ENCODE measurements at regions of chrX and their contacts with region 1.

Region 1: GRCh38 chrX:21839334-21840192 is at the start of gene MBTPS2:
- DNase-seq: peak; percentile 69 to 90 (median 76)
- ATAC-seq: peak; percentile 93
- H3K4me3 ChIP-seq: peak within 1 kb of the TSS; percentile 86
- H3K4me3 Mint-ChIP-seq: peak within 1 kb of the TSS; percentile 96
- H3K27ac ChIP-seq: peak within 1 kb of the TSS in 1 of 2 donors; percentile 55
- H3K27ac Mint-ChIP-seq: peak within 1 kb of the TSS; percentile 93
- H3K4me1 ChIP-seq: peaks cover 12% of the 10 kb centered on the region
- H3K4me1 Mint-ChIP-seq: peaks cover 14% of the 10 kb centered on the region
- H3K27me3 ChIP-seq: no peaks in the 10 kb centered on the region
- H3K27me3 Mint-ChIP-seq: no peaks in the 10 kb centered on the region
- CTCF ChIP-seq: no peak
- total RNA-seq, gene MBTPS2: 3.1 to 3.4 TPM

Region 2: DNA sequence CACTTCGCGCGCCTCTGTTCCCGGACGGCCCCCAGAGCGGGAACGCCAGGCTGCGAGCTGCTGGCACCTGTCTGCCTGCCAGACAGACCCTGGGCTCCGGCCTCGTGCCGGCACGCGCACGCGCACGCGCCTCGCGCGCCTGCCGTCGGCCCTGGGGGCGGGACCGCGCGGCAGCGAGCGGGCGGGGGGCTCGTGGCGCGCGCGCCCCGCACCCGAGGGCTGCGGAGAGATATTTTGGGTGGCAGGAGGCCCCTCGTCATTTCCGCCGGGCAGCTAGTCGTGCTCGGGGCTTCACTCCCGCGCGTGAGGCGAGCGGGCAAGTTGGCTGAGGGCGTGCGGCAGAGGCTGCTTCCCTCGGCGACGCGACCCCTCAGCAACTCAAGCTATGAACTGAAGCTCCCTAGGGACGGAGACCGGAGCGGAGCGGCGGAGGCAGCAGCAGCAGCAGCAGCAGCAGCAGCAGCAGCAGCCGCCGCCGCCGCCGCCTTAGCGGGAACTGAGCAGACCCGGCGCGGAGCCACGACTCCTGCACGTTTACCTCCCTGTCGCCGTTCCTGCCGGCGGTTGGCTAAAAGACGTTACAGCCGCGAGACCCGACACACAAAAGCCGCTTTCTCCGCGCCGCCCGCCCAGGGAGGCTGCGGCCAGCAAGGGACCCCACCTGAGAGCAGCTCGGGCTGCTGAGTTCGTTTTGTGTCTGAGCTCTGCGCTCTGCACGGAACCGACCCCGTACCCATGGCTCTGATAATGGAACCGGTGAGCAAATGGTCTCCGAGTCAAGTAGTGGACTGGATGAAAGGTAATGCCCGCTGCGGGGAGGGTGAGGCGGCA is 465.2 kb before region 1 on chrX and contains the start of gene CNKSR2:
- CTCF ChIA-PET with region 1: no interaction called
- POLR2A ChIA-PET with region 1: no interaction called
- intact Hi-C with region 1: loop called in 1 of 2 experiments (anchors 5 kb)
- DNase-seq: peak; percentile 37 to 81 (median 64)
- ATAC-seq: peak; percentile 68
- H3K4me3 ChIP-seq: peak within 1 kb of the TSS; percentile 73
- H3K4me3 Mint-ChIP-seq: peak within 1 kb of the TSS; percentile 93
- H3K27ac ChIP-seq: peak within 1 kb of the TSS in 1 of 2 donors; percentile 35
- H3K27ac Mint-ChIP-seq: peak within 1 kb of the TSS; percentile 82
- H3K4me1 ChIP-seq: peaks cover 6% of the 10 kb centered on the region
- H3K4me1 Mint-ChIP-seq: peaks cover 41% of the 10 kb centered on the region
- H3K27me3 ChIP-seq: no peaks in the 10 kb centered on the region
- H3K27me3 Mint-ChIP-seq: no peaks in the 10 kb centered on the region
- CTCF ChIP-seq: no peak
- total RNA-seq, gene CNKSR2: 14.4 to 14.8 TPM

Region 3: GRCh38 chrX:21524008-21524407 is 315.6 kb before region 1 on chrX:
- CTCF ChIA-PET with region 1: no interaction called
- POLR2A ChIA-PET with region 1: no interaction called
- intact Hi-C with region 1: no loop called
- DNase-seq: no peak
- ATAC-seq: no peak
- H3K4me3 ChIP-seq: no peak overlapping the region
- H3K4me3 Mint-ChIP-seq: no peak overlapping the region
- H3K27ac ChIP-seq: no peak overlapping the region
- H3K27ac Mint-ChIP-seq: no peak overlapping the region
- H3K4me1 ChIP-seq: no peaks in the 10 kb centered on the region
- H3K4me1 Mint-ChIP-seq: peaks cover 5% of the 10 kb centered on the region
- H3K27me3 ChIP-seq: no peaks in the 10 kb centered on the region
- H3K27me3 Mint-ChIP-seq: no peaks in the 10 kb centered on the region
- CTCF ChIP-seq: no peak

Region 4: DNA sequence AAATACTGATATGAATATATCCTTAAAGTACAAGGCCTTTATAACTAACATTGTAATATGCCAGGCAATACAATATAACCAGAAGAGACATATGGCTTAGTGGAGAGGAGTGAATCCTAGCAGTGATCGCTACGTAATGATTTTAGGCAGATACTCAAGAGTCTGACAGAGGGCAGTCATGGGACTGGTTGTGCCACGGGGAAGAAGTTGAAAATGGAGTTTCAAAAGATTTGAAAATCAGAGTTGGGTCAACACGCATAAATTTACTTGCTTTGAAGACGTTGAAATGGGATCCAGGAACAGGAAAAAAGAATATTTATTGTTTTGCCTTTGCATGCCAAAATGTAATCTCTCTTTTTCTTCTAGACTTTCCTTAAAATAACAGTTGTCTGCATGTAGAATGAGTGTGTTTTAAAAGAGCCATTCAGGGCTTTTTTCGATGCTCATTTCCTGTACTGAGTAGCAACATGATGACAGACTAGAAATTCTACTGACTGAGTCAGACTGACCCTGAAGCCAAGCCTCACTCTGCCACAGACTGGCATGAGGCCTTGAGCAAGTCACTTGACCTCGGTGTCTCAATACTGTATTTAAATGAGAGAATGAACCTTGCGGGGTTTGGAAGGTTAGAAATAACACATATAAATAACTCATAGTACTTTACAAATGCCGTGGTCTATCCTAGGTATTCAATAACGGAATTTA is 92.9 kb after region 1 on chrX:
- CTCF ChIA-PET with region 1: no interaction called
- POLR2A ChIA-PET with region 1: no interaction called
- intact Hi-C with region 1: loop called in 1 of 2 experiments (anchors 10 kb)
- DNase-seq: peak in 2 of 14 experiments; percentile 31 to 52
- ATAC-seq: no peak
- H3K4me3 ChIP-seq: no peak overlapping the region
- H3K4me3 Mint-ChIP-seq: no peak overlapping the region
- H3K27ac ChIP-seq: no peak overlapping the region
- H3K27ac Mint-ChIP-seq: no peak overlapping the region
- H3K4me1 ChIP-seq: no peaks in the 10 kb centered on the region
- H3K4me1 Mint-ChIP-seq: peaks cover 14% of the 10 kb centered on the region
- H3K27me3 ChIP-seq: no peaks in the 10 kb centered on the region
- H3K27me3 Mint-ChIP-seq: no peaks in the 10 kb centered on the region
- CTCF ChIP-seq: no peak

Region 5: GRCh38 chrX:21972721-21973120 is 133.2 kb after region 1 on chrX:
- CTCF ChIA-PET with region 1: no interaction called
- POLR2A ChIA-PET with region 1: no interaction called
- intact Hi-C with region 1: loop called in 1 of 2 experiments (anchors 5 kb)
- DNase-seq: peak in 13 of 14 experiments; percentile 5 to 82 (median 39)
- ATAC-seq: peak; percentile 94
- H3K4me3 ChIP-seq: no peak overlapping the region
- H3K4me3 Mint-ChIP-seq: peak overlapping the region; percentile 83
- H3K27ac ChIP-seq: peak overlapping the region in 1 of 2 donors; percentile 83
- H3K27ac Mint-ChIP-seq: peak overlapping the region; percentile 94
- H3K4me1 ChIP-seq: peaks cover 17% of the 10 kb centered on the region
- H3K4me1 Mint-ChIP-seq: peaks cover 26% of the 10 kb centered on the region
- H3K27me3 ChIP-seq: no peaks in the 10 kb centered on the region
- H3K27me3 Mint-ChIP-seq: no peaks in the 10 kb centered on the region
- CTCF ChIP-seq: no peak